Naive thymus-derived CD4-positive, alpha-beta T cell (primary cell): ENCODE measurements at regions of chr4 and their contacts with region 1.

Region 1: DNA sequence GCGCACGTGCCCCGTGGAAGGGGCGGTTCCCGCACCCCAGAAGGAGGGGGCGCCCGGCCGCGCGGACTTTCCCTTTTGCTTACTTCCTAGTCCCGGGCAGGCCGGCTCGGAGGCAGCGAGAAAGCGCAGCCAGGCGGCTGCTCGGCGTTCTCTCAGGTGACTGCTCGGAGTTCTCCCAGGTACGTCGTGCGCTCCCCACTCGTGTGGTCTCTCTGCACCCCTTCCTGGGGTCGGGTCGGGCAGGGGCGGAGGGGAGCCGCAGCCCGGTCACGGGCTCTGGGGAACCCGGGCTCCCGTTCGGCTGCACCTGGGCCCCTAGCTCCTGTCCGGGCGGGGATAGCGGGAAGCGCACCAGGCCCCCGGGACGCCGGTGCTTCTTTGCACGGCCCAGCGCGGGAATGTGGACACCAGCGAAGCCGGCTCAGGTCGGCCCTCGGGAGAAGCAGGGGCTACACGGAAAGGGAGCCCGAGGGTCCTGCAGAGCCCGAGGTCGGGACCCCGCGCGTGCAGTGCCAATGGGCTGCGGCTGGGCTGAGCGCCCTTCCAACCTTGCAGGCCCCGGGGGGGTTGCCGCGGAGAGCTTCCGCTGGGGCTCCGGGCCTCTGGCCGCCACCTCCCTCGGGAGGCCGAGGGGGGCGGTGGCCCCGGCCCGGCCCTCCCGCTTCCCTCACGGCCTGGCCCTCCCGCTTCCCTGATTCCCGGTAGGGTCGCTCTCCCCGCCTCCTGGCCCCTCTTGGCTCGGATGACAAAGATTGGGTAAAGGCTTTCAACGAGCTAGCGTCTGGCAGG is at the start of gene TLR2:
- DNase-seq: peak; percentile 43 to 71 (median 55)
- ATAC-seq: peak; percentile 94
- H3K4me3 ChIP-seq: peak within 1 kb of the TSS; percentile 69
- H3K4me3 Mint-ChIP-seq: peak within 1 kb of the TSS; percentile 82 to 97 (median 90)
- H3K27ac ChIP-seq: peak within 1 kb of the TSS; percentile 54
- H3K27ac Mint-ChIP-seq: peak within 1 kb of the TSS; percentile 1 to 83 (median 76)
- H3K4me1 ChIP-seq: no peaks in the 10 kb centered on the region
- H3K4me1 Mint-ChIP-seq: peaks cover 9 to 22% (median 18%) of the 10 kb centered on the region in 7 donors
- H3K27me3 ChIP-seq: no peaks in the 10 kb centered on the region
- H3K27me3 Mint-ChIP-seq: peaks cover 0 to 43% (median 13%) of the 10 kb centered on the region in 5 donors
- total RNA-seq, gene TLR2: 3.3 to 84.2 (median 6.6) TPM

Region 2: GRCh38 chr4:153651071-153651986 is 33.0 kb before region 1 on chr4:
- CTCF ChIA-PET with region 1: no interaction called
- POLR2A ChIA-PET with region 1: interaction called, 3 read pairs
- intact Hi-C with region 1: loop called (anchors 1 to 2 kb)
- DNase-seq: peak in 7 of 9 donors; percentile 43 to 72 (median 66)
- ATAC-seq: peak; percentile 88
- H3K4me3 ChIP-seq: peak overlapping the region; percentile 28
- H3K4me3 Mint-ChIP-seq: peak overlapping the region; percentile 20 to 79 (median 50)
- H3K27ac ChIP-seq: no peak overlapping the region
- H3K27ac Mint-ChIP-seq: peak overlapping the region; percentile 20 to 90 (median 61)
- H3K4me1 ChIP-seq: peaks cover 18% of the 10 kb centered on the region in 2 donors
- H3K4me1 Mint-ChIP-seq: peaks cover 18 to 53% (median 33%) of the 10 kb centered on the region in 7 donors
- H3K27me3 ChIP-seq: no peaks in the 10 kb centered on the region
- H3K27me3 Mint-ChIP-seq: peaks cover 0 to 3% (median 0%) of the 10 kb centered on the region in 5 donors

Region 3: DNA sequence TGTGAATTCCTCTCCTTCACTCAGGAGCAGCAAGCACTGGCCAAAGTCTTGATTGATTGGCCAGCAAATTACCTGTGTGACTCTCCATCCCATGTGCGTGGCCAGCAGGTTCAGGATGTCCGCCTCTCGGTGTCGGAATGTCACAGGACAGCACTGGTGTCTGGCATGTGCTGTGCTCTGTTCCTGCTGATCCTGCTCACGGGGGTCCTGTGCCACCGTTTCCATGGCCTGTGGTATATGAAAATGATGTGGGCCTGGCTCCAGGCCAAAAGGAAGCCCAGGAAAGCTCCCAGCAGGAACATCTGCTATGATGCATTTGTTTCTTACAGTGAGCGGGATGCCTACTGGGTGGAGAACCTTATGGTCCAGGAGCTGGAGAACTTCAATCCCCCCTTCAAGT is 20.1 kb after region 1 on chr4:
- CTCF ChIA-PET with region 1: no interaction called
- POLR2A ChIA-PET with region 1: no interaction called
- intact Hi-C with region 1: no loop called
- DNase-seq: no peak
- ATAC-seq: no peak
- H3K4me3 ChIP-seq: no peak overlapping the region
- H3K4me3 Mint-ChIP-seq: no peak overlapping the region
- H3K27ac ChIP-seq: no peak overlapping the region
- H3K27ac Mint-ChIP-seq: peak overlapping the region in 1 of 9 donors; percentile 38
- H3K4me1 ChIP-seq: peaks cover 0 to 8% of the 10 kb centered on the region in 2 donors
- H3K4me1 Mint-ChIP-seq: peaks cover 8 to 22% (median 13%) of the 10 kb centered on the region in 7 donors
- H3K27me3 ChIP-seq: no peaks in the 10 kb centered on the region
- H3K27me3 Mint-ChIP-seq: peaks cover 0 to 14% (median 0%) of the 10 kb centered on the region in 5 donors